ENCODE measurements at regions of chr17 and their contacts with region 1.

Region 1: DNA sequence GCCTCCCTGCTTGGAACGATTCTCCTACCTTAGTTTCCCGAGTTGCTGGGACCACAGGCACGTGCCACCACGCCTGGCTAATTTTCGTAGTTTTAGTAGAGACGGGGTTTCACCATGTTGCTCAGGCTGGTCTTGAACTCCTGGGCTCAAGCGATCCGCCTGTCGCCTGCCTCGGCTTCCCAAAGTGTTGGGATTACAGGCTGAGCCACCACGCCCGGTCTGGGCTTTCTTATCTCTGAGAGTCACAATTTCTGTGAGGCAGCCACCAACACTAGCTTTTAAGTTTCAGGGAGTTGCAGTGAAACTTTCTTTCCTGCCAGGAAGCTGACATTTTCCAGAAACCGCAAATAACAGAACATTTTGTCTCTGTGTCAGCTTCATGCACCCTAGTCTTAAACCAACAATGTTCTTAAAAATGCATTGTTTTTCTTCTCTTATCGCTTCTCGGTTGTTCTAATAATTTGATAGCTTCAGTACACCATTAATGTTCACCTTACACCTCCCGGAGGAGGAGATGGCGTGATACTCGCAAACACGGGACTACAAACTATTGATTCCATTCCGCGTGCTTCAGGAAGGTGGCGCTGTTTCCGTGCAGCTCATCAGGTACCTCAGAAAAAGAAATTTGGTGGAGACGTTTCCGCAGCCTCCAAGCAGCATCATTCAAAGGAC is 7.4 kb upstream of the DHRS7B start:
- DNase-seq: peak; percentile 68
- H3K4me3 Mint-ChIP-seq: no peak overlapping the region
- H3K27ac Mint-ChIP-seq: no peak overlapping the region
- H3K4me1 Mint-ChIP-seq: peaks cover 6% of the 10 kb centered on the region
- H3K27me3 Mint-ChIP-seq: no peaks in the 10 kb centered on the region
- CTCF ChIP-seq: peak; percentile 82

Region 2: GRCh38 chr17:20896153-20896649 is 223.2 kb before region 1 on chr17:
- CTCF ChIA-PET with region 1: no interaction called
- POLR2A ChIA-PET with region 1: no interaction called
- intact Hi-C with region 1: no loop called
- DNase-seq: peak; percentile 8
- H3K4me3 Mint-ChIP-seq: no peak overlapping the region
- H3K27ac Mint-ChIP-seq: no peak overlapping the region
- H3K4me1 Mint-ChIP-seq: no peaks in the 10 kb centered on the region
- H3K27me3 Mint-ChIP-seq: no peaks in the 10 kb centered on the region
- CTCF ChIP-seq: no peak

Region 3: GRCh38 chr17:21105064-21105894 is 14.1 kb before region 1 on chr17:
- CTCF ChIA-PET with region 1: interaction called, 14 read pairs
- POLR2A ChIA-PET with region 1: interaction called, 6 read pairs
- intact Hi-C with region 1: no loop called
- DNase-seq: no peak
- H3K4me3 Mint-ChIP-seq: no peak overlapping the region
- H3K27ac Mint-ChIP-seq: no peak overlapping the region
- H3K4me1 Mint-ChIP-seq: no peaks in the 10 kb centered on the region
- H3K27me3 Mint-ChIP-seq: no peaks in the 10 kb centered on the region
- CTCF ChIP-seq: no peak

Region 4: DNA sequence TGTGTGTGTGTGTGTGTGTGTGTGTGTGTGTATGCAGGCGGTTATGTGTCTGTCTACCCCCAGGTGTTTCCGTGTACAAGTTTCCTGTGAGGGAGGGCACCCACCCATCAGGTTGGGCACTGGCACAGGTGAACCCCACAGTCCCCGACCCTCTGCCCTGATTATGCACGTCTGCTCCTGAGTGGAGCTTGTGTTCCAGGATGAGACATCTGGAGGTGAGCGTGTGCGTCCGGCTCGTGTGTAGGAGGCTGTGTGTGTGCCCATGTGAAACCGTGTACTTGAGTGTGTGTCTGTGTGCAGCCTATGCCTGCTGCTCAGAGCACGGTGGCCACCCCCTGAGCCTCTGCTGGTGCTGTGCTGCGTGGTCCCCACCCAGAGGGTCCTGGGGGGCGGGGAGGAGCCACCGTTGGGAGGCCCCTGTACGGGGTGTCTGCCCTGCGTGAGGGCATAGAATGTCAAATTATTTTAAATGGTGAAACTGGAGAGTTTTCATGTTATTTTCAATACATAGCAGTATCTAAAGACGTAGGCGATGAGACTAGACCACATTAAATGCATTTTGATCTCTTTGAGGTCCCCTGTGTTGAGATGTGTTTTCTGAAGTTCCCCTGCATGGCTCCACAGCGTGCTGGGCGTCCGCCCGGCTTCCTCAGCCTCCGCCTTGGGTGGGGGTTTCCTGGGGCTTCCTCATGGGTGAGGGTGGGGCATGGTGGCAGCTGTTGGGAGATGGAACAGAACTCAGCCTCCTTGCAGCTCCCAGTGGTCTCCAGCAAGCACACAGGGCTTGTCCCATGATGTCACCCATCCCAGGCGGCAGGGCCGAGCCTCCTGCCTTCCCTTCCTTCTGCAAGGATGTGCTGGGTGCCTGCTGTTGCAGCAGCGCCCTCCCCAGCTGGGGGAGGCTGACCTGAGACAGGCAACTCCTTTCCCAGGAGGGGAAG is 300.2 kb after region 1 on chr17:
- CTCF ChIA-PET with region 1: no interaction called
- POLR2A ChIA-PET with region 1: no interaction called
- intact Hi-C with region 1: no loop called
- DNase-seq: no peak
- H3K4me3 Mint-ChIP-seq: no peak overlapping the region
- H3K27ac Mint-ChIP-seq: no peak overlapping the region
- H3K4me1 Mint-ChIP-seq: no peaks in the 10 kb centered on the region
- H3K27me3 Mint-ChIP-seq: no peaks in the 10 kb centered on the region
- CTCF ChIP-seq: no peak

Measured in MCF 10A (cell line).